Gastrocnemius medialis (tissue), 4 donors: ENCODE measurements at regions of chr17 and their contacts with region 1.

Region 1: GRCh38 chr17:75827252-75828115 is 16.7 kb downstream of the UNC13D start:
- DNase-seq: peak in 1 of 2 donors; percentile 66
- ATAC-seq: peak; percentile 42 to 78
- H3K4me3 ChIP-seq: peak overlapping the region; percentile 16 to 51 (median 44)
- H3K27ac ChIP-seq: peak overlapping the region; percentile 74 to 77 (median 76)
- H3K4me1 ChIP-seq: peaks cover 15 to 17% of the 10 kb centered on the region in 2 donors
- H3K27me3 ChIP-seq: no peaks in the 10 kb centered on the region
- CTCF ChIP-seq: peak; percentile 64 to 79 (median 76)
- POLR2A ChIP-seq: no peak

Region 2: DNA sequence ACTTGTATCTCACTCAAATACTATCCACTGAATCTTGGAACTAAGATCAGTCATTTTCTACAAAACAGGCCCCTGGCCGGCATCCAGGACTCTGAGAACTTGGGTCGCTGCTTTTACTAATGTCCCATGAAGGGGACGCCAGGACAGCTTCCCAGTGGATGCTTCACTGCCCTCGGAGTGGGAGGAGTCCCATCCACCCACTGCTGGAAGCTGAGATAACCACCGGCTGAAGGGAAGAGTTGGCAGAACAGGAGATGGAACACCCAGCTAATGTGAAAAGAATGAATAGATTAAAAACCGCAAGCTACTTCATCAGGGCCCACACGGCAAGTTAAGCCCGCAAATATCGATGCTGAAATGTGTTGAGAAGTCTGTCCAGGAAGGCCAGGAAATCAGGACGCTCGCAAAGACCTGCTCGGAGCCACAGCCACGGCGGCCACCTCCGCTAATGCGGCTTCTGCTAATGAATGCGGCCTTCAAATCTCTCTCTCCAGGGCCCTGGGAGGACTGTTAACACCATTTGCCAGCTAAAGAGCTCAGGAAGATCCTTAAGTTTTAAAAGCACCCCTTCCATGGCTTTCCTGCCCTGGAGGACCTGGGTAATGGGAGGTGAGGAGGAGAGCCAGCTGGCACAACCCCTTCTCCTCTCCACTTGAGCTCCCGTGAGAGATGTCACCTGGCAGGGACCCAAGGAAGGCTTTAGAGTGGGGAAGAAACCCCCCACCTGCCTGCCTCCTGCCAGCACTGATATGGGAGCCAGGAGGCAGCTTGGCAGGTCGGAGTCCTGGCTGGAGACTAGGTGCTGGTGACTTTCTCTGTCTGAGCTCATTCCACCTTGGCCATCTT is 1850.6 kb before region 1 on chr17:
- in situ Hi-C with region 1: no loop called
- intact Hi-C with region 1: no loop called
- DNase-seq: no peak
- ATAC-seq: no peak
- H3K4me3 ChIP-seq: no peak overlapping the region
- H3K27ac ChIP-seq: no peak overlapping the region
- H3K4me1 ChIP-seq: no peaks in the 10 kb centered on the region
- H3K27me3 ChIP-seq: peaks cover 0 to 9% (median 8%) of the 10 kb centered on the region in 3 donors
- CTCF ChIP-seq: no peak
- POLR2A ChIP-seq: no peak

Region 3: DNA sequence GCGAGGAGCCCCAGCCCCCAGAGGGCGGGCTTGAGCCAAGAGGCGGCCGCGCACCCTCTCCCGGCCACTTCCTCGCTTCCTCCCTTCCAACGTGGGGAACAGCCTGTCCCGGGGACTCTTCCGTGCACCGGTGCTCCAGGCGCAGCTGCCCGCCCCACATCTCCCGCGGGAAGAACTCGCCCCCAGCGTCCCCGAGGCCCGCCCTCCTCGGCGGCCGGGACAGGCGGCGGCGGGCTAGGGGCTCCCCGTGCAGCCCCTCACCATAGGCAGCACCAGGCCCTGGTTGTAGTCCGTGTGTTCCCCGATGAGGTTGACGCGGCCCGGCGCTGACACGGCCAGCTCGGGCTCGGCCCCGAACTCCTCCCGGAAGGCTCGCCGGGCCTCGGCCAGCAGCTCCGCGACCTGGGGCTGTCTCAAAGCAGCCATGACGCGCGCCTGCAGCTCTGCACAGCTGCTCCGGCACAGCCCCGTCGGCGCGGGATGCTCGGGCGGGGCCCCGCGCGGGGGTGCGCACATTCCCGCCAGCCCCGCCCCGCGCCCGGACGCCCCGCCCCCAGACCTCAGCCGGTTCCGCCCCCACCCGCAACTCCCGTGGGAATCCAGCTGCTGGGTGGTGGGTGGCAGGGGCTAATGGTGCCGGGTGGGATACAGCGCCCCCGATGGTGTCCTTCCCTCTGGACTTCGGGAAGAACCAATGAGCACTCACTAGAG is 62.6 kb before region 1 on chr17 and contains the start of gene GALK1:
- in situ Hi-C with region 1: no loop called
- intact Hi-C with region 1: loop called (anchors 2 kb)
- DNase-seq: peak; percentile 47 to 59
- ATAC-seq: peak; percentile 80
- H3K4me3 ChIP-seq: peak within 1 kb of the TSS; percentile 58 to 83 (median 72)
- H3K27ac ChIP-seq: peak within 1 kb of the TSS; percentile 54 to 81 (median 74)
- H3K4me1 ChIP-seq: peaks cover 6 to 14% of the 10 kb centered on the region in 2 donors
- H3K27me3 ChIP-seq: no peaks in the 10 kb centered on the region
- CTCF ChIP-seq: peak; percentile 13 to 81 (median 69)
- POLR2A ChIP-seq: peak; percentile 30 to 59
- total RNA-seq, gene GALK1: 8.7 to 18.3 (median 11.0) TPM

Region 4: DNA sequence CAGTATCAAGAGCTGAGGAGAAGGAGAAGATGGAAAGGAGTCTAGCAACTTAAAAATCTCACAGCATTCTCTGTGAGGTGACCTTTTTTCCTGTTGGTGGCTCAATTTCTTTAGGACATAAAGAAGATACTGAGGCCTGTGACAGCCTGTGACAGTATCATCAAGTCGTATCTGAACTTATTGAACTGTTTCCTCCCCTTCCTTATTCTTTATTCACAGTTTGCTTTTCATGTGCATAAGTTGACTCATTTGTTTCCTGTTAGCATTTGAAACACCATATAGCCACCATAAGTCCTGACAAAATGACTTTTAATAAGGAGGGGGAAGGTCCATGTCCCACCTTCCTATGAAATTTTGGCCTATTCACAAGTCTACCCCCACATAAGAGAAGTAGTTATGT is 34.0 kb before region 1 on chr17:
- in situ Hi-C with region 1: no loop called
- intact Hi-C with region 1: loop called (anchors 5 kb)
- DNase-seq: no peak
- ATAC-seq: no peak
- H3K4me3 ChIP-seq: no peak overlapping the region
- H3K27ac ChIP-seq: no peak overlapping the region
- H3K4me1 ChIP-seq: peaks cover 0 to 5% of the 10 kb centered on the region in 2 donors
- H3K27me3 ChIP-seq: no peaks in the 10 kb centered on the region
- CTCF ChIP-seq: no peak
- POLR2A ChIP-seq: peak in 1 of 2 donors; percentile 7